HCT116 (cell line): ENCODE measurements at regions of chr3 and their contacts with region 1.

Region 1: DNA sequence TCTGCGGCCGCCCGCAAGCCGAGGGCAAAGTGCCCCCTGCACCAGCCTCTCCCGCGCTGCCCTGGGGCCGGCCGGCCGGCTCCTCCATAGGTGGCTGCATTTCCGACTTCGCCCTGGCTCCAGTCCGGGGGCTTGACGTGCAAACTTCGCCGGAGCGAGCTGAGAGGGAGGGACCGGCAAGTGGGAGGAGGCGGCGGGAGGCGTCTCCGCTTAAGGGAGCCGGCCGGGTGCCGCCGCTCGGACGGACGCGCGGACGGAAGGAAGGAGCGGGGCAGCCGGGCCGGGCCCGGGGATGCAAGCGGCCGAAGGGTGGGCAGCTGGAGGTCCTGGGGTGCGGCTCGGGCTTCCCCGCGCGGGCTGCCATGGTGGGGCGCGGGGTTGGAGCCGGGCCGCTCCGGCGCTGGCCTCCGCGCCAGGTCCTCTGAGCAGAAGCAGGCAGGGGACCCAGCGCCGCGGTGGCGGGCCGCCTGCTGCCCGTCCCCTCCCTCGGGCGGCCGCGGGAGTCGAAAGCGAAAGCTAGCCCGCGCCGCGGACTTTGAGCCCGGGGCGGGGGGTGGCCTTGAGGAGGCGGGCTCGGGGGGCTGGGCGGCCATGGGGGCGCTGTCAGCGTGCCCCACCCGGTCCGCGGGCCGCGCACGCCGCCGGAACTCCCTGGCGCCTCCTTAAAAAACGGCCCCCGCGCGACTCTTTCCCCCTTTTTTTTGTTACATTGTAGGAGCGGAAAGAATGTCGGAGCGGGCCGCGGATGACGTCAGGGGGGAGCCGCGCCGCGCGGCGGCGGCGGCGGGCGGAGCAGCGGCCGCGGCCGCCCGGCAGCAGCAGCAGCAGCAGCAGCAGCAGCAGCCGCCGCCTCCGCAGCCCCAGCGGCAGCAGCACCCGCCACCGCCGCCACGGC is at the start of gene SCAANT1:
- DNase-seq: peak; percentile 62
- ATAC-seq: peak; percentile 80
- H3K4me3 ChIP-seq: peak within 1 kb of the TSS; percentile 63 to 74
- H3K27ac ChIP-seq: peak within 1 kb of the TSS; percentile 91
- H3K4me1 ChIP-seq: peaks cover 12 to 25% of the 10 kb centered on the region in 2 experiments; a peak in 3 of 4 replicates
- H3K27me3 ChIP-seq: no peaks in the 10 kb centered on the region
- CTCF ChIP-seq: no peak
- POLR2A ChIP-seq: peak; percentile 16
- RAD21 ChIP-seq: no peak
- total RNA-seq, gene SCAANT1: not detected

Region 2: DNA sequence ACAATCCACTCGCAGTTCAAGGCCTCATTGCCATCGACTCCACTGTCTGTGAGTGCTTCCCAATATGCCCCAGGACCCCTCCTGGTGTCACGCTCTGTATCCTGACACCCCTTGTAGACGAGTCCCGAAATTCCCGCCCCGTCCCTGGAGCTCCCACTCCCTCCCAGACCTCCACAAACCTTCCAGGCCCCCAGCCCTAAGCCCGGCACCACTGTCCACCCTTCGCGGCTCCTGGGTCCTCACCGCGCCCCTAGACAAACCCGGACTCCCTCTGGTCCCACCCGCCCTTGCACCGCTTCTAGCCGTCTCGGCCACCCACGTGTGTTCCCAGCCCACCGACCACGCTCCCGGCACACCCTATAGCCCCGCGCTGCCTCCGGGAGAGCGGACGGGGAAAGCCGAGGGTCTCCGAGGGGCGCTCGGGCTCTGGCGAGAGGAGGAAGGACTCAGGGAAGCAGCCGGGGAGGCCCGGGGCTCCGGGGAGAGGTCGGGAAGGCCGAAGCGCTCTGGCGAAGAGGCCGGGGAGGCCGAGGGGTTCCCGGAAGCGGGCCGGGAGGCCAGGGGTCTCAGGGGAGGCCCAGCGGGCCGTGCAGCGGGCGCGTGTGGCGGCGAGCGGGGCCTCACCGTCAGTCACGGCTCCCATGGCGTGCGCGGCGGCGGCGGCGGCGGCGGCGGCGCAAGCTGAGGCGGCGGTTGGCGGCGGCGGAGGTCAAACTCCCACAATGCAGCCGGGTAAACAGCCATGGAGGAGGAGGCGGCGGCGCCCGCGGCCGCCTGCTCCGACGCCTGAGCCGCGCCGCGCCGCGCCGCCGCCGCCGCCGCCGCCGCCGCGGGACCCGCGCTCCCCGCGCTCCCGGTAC is 48.7 kb before region 1 on chr3 and contains the starts of genes ATXN7 and THOC7:
- CTCF ChIA-PET with region 1: interaction called, 3 read pairs
- POLR2A ChIA-PET with region 1: no interaction called
- RAD21 ChIA-PET with region 1: no interaction called
- intact Hi-C with region 1: loop called (anchors 5 kb)
- DNase-seq: no peak
- ATAC-seq: peak; percentile 77
- H3K4me3 ChIP-seq: peak within 1 kb of the TSS; percentile 68 to 88
- H3K27ac ChIP-seq: peak within 1 kb of the TSS; percentile 93
- H3K4me1 ChIP-seq: peaks cover 4 to 18% of the 10 kb centered on the region in 2 experiments; a peak in 3 of 4 replicates
- H3K27me3 ChIP-seq: no peaks in the 10 kb centered on the region
- CTCF ChIP-seq: no peak
- POLR2A ChIP-seq: no peak
- RAD21 ChIP-seq: no peak
- total RNA-seq, gene ATXN7: 27.5 TPM
- total RNA-seq, gene THOC7: 67.3 TPM

Region 3: DNA sequence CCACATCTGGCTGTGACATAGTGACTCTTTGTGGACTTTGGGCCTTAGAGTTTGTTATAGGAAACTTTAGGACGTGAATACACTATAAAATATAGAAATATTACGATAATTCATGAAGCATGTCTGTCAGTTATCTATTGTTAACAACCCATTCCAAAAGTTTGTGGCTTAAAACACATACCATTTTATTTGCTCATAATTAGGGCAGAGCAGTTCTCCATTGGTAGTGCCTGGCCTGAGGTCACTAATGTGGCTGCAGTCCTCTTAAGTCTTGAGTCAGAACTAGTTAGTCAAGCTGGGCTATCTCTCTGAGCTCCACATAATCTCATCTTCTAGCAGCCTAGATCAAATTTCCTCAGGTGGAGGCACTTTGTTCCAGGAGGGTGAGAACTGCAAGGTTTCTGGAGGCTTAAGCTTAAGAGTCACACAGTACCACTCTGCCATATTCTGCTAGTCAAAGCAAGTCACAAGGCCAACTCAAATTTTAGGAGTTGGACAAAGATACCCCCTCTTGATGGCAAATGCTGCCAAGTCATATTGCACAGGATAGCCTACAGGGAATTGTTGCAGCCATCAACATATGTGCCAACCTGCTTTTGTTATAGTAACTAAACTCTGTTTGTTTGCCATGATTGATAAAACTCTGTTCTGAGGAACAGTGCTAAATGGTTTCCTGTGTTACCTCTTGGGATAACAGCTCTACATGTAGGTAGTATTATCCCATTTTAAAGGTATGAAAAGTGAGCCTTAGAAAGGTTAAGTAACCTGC is 39.8 kb before region 1 on chr3:
- CTCF ChIA-PET with region 1: no interaction called
- POLR2A ChIA-PET with region 1: no interaction called
- RAD21 ChIA-PET with region 1: no interaction called
- intact Hi-C with region 1: loop called (anchors 5 kb)
- DNase-seq: peak; percentile 54
- ATAC-seq: peak; percentile 92
- H3K4me3 ChIP-seq: no peak overlapping the region
- H3K27ac ChIP-seq: no peak overlapping the region
- H3K4me1 ChIP-seq: peaks cover 13 to 15% of the 10 kb centered on the region in 2 experiments
- H3K27me3 ChIP-seq: no peaks in the 10 kb centered on the region
- CTCF ChIP-seq: no peak
- POLR2A ChIP-seq: no peak
- RAD21 ChIP-seq: no peak